Activated CD8-positive, alpha-beta T cell treated with anti-CD3 and anti-CD28 coated beads, Interleukin-2, amount 10 ng/mL, durations not matched to agents 7 days and 5 days (primary cell): ENCODE measurements at regions of chr11 and their contacts with region 1.

Region 1: GRCh38 chr11:36746886-36747710 is 149.1 kb upstream of the RAG2 start:
- DNase-seq: peak; percentile 94
- ATAC-seq: peak; percentile 99
- H3K4me3 Mint-ChIP-seq: no peak overlapping the region
- H3K27ac Mint-ChIP-seq: no peak overlapping the region
- H3K4me1 Mint-ChIP-seq: no peaks in the 10 kb centered on the region
- H3K27me3 Mint-ChIP-seq: peaks cover 27% of the 10 kb centered on the region

Region 2: DNA sequence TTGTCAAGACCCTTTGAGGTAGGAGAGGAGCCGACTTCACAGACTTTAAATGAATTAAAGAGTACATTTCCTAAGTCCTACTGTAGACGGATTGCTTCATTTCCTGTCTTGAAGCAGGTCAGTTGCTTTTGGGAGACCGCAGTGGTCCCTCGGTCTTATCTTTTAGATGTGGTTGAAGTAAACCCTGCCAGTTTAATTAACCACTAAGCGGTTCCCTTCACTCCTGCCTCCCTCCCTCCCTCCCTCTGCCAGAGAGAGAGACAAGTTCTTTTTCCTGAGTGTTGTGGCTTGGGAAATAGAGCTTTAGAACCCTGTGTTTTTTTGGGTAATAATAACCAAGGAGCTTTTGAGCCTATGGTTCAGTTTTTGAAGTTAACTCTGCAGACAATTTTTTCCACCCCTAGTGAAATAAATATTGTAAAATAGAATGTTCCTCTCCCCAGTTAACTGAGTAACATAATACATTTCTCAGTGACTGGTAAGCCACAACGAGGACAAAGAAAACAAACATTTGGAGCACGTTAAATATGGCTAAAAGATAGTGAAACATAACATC is 655.8 kb before region 1 on chr11:
- CTCF ChIA-PET with region 1: no interaction called
- POLR2A ChIA-PET with region 1: no interaction called
- DNase-seq: no peak
- ATAC-seq: no peak
- H3K4me3 Mint-ChIP-seq: no peak overlapping the region
- H3K27ac Mint-ChIP-seq: no peak overlapping the region
- H3K4me1 Mint-ChIP-seq: peaks cover 8% of the 10 kb centered on the region
- H3K27me3 Mint-ChIP-seq: peaks cover 25% of the 10 kb centered on the region

Region 3: GRCh38 chr11:36577859-36578258 is 169.2 kb before region 1 on chr11:
- CTCF ChIA-PET with region 1: interaction called, 12 read pairs
- POLR2A ChIA-PET with region 1: no interaction called
- DNase-seq: no peak
- ATAC-seq: no peak
- H3K4me3 Mint-ChIP-seq: no peak overlapping the region
- H3K27ac Mint-ChIP-seq: no peak overlapping the region
- H3K4me1 Mint-ChIP-seq: no peaks in the 10 kb centered on the region
- H3K27me3 Mint-ChIP-seq: peaks cover 5% of the 10 kb centered on the region

Region 4: DNA sequence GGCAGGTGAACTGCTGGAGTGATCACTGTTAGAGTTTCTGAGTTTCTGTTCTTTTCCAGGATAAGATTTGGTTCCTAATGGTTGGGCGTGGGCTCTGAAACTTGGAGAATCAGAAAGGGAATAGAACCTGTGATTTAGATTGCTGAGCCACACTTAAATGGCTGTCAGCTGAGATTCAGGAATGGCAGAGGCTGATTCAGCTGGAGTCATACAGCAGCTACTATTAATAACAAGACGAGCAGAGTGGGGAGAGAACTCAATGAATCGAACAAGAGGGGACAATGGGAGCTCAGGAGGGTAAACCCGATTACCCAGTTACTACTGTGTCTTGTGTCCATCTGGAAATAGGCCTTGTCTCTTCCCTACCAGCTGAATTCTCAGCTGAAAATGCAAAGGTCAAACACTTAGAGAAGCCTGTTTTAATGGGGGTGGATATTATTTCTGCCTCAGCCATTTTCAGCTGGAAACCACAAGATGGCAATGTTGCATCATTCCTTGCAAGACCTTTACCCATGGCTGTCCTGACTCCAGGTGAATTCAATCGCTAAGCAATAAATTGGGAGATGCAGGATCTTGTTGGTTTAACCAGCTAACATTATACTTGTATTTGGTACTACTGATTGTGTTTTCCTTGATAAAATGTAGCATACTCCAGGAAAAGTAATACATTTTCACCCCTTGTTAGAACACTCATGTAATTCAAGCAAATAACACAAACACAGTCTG is 44.6 kb before region 1 on chr11:
- CTCF ChIA-PET with region 1: interaction called, 22 read pairs
- POLR2A ChIA-PET with region 1: no interaction called
- DNase-seq: no peak
- ATAC-seq: no peak
- H3K4me3 Mint-ChIP-seq: no peak overlapping the region
- H3K27ac Mint-ChIP-seq: no peak overlapping the region
- H3K4me1 Mint-ChIP-seq: no peaks in the 10 kb centered on the region
- H3K27me3 Mint-ChIP-seq: peaks cover 9% of the 10 kb centered on the region

Region 5: GRCh38 chr11:36719358-36720107 is 27.6 kb before region 1 on chr11:
- CTCF ChIA-PET with region 1: interaction called, 14 read pairs
- POLR2A ChIA-PET with region 1: no interaction called
- DNase-seq: no peak
- ATAC-seq: no peak
- H3K4me3 Mint-ChIP-seq: no peak overlapping the region
- H3K27ac Mint-ChIP-seq: no peak overlapping the region
- H3K4me1 Mint-ChIP-seq: no peaks in the 10 kb centered on the region
- H3K27me3 Mint-ChIP-seq: peaks cover 7% of the 10 kb centered on the region

Region 6: GRCh38 chr11:36763187-36763586 is 16.1 kb after region 1 on chr11:
- CTCF ChIA-PET with region 1: interaction called, 11 read pairs
- POLR2A ChIA-PET with region 1: no interaction called
- DNase-seq: no peak
- ATAC-seq: no peak
- H3K4me3 Mint-ChIP-seq: no peak overlapping the region
- H3K27ac Mint-ChIP-seq: no peak overlapping the region
- H3K4me1 Mint-ChIP-seq: no peaks in the 10 kb centered on the region
- H3K27me3 Mint-ChIP-seq: no peaks in the 10 kb centered on the region

Region 7: DNA sequence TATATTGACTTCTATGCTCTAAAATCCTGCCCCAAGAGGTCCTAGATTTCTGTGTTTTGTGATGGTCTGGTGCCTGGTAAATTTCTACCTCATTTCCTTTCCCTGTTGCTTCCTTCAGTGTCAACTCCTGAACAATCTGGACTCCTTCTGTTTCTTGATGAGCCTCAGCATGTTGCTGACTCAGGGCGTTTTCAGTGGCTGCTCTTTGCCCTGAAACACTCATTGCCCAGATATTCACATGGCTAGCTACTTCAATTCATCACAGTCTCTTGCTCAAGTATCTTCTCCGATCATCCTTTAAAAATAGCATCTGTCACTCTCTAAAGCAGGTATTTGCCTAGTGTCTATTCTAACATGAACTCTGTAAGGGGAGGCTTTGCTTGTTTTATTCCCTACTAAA is 377.3 kb after region 1 on chr11:
- CTCF ChIA-PET with region 1: no interaction called
- POLR2A ChIA-PET with region 1: no interaction called
- DNase-seq: no peak
- ATAC-seq: no peak
- H3K4me3 Mint-ChIP-seq: no peak overlapping the region
- H3K27ac Mint-ChIP-seq: no peak overlapping the region
- H3K4me1 Mint-ChIP-seq: no peaks in the 10 kb centered on the region
- H3K27me3 Mint-ChIP-seq: no peaks in the 10 kb centered on the region